ENCODE measurements at regions of chr15 and their contacts with region 1.

Region 1: GRCh38 chr15:23877502-23878412 is 190.7 kb upstream of the NDN start:
- DNase-seq: no peak
- H3K4me3 ChIP-seq: no peak overlapping the region
- H3K27ac ChIP-seq: no peak overlapping the region
- H3K4me1 ChIP-seq: peaks cover 0 to 4% (median 0%) of the 10 kb centered on the region in 4 donors
- H3K27me3 ChIP-seq: peaks cover 0 to 19% (median 0%) of the 10 kb centered on the region in 4 donors
- CTCF ChIP-seq: peak; percentile 33 to 51 (median 43)
- EP300 ChIP-seq: no peak
- POLR2A ChIP-seq: no peak

Region 2: GRCh38 chr15:23606226-23606625 is 271.5 kb before region 1 on chr15:
- intact Hi-C with region 1: loop called (anchors 10 kb)
- DNase-seq: no peak
- H3K4me3 ChIP-seq: no peak overlapping the region
- H3K27ac ChIP-seq: no peak overlapping the region
- H3K4me1 ChIP-seq: no peaks in the 10 kb centered on the region
- H3K27me3 ChIP-seq: peaks cover 0 to 2% (median 0%) of the 10 kb centered on the region in 4 donors
- CTCF ChIP-seq: no peak
- EP300 ChIP-seq: no peak
- POLR2A ChIP-seq: no peak

Region 3: GRCh38 chr15:23642413-23643044 is 235.2 kb before region 1 on chr15:
- intact Hi-C with region 1: loop called (anchors 5 kb)
- DNase-seq: no peak
- H3K4me3 ChIP-seq: no peak overlapping the region
- H3K27ac ChIP-seq: no peak overlapping the region
- H3K4me1 ChIP-seq: peaks cover 0 to 6% (median 6%) of the 10 kb centered on the region in 4 donors
- H3K27me3 ChIP-seq: peaks cover 0 to 42% (median 4%) of the 10 kb centered on the region in 4 donors
- CTCF ChIP-seq: peak; percentile 67 to 90 (median 81)
- EP300 ChIP-seq: no peak
- POLR2A ChIP-seq: no peak

Region 4: GRCh38 chr15:23823508-23823907 is 54.2 kb before region 1 on chr15:
- intact Hi-C with region 1: loop called (anchors 10 kb)
- DNase-seq: no peak
- H3K4me3 ChIP-seq: no peak overlapping the region
- H3K27ac ChIP-seq: no peak overlapping the region
- H3K4me1 ChIP-seq: no peaks in the 10 kb centered on the region
- H3K27me3 ChIP-seq: no peaks in the 10 kb centered on the region
- CTCF ChIP-seq: no peak
- EP300 ChIP-seq: no peak
- POLR2A ChIP-seq: no peak

Region 5: GRCh38 chr15:23835953-23836352 is 41.8 kb before region 1 on chr15:
- intact Hi-C with region 1: no loop called
- DNase-seq: no peak
- H3K4me3 ChIP-seq: no peak overlapping the region
- H3K27ac ChIP-seq: no peak overlapping the region
- H3K4me1 ChIP-seq: no peaks in the 10 kb centered on the region
- H3K27me3 ChIP-seq: no peaks in the 10 kb centered on the region
- CTCF ChIP-seq: no peak
- EP300 ChIP-seq: no peak
- POLR2A ChIP-seq: no peak

Measured in esophagus muscularis mucosa (tissue), 4 donors.